ENCODE measurements at regions of chr16 and their contacts with region 1.

Region 1: DNA sequence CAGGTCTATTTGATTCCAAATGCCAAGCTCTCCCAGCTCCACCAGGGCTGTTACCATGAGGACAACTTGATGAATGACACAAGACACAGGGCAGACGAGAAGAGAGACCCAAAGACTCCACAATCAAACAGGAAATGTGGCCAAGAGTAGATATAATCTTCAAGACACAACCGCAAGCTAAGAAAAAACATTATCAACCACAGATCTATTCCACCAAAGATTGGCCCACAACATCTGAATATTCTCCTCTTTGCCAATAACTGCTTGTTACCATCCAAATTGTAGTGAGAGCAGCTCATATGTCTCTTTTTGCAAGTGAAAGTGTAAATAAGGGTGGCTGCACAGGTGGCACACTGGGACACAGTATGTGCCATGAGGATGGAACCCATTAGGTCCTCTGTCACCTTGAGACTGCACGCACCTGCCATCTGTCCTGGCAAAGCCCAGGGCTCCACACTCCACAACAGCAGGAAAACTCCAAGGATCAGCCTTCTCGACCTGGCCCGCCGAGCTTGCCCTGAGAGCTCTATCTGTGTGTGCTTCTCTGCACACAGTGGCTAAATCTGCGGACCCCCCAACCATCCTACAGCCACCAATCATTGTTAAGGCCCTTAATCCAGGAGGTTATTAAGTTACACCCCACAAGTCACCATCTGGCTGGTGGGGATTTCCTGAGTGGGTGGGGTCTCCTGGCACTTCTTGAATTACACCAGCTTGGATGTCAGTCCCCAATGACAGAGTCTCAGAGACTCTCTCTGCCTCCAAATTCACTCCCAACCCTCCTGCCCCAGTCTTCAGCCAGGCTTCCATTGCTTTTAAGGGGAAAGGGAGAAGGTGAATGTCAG is 50.5 kb downstream of the DYNLRB2 start:
- DNase-seq: peak; percentile 53
- H3K4me3 Mint-ChIP-seq: peak overlapping the region; percentile 17
- H3K27ac Mint-ChIP-seq: peak overlapping the region; percentile 76
- H3K4me1 Mint-ChIP-seq: peaks cover 66% of the 10 kb centered on the region
- H3K27me3 Mint-ChIP-seq: no peaks in the 10 kb centered on the region

Region 2: DNA sequence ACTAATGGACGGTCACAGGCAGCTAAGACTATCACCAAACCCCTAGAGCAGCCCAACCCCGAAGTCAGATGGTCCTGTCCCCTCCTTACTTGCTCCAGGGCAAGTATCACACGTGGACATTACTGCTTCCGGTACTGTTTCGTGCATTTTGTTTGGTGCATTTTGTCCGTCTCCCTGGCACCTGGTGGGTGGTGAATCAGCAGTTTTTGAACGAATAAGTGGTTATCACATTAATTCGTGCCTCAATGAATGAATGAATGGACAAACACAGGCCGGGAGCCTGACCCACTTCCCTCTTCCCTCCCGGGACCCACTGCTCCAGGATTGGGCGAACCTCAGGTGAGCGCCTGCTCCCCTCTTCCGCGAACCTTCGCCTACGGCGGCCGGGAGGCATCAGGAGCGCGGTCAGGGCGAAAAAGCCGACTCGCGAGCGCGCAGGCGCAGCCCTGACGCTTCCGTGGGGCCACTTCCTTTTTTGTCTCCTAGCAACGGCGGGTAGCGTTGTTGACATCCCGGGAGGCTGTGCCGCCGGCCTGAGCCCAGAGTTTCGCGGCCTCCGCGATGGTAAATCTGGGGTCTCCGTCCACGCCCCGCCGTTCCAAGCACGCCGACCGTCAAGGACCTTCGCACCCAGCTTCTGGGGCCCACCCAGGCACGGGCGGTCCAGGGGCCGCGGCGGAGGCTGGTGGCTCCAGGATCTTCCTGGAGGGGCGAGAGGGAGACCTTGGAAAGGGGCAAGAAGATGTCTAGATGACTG is 50.6 kb before region 1 on chr16 and contains the start of gene DYNLRB2:
- intact Hi-C with region 1: loop called (anchors 1 kb)
- DNase-seq: peak; percentile 92
- H3K4me3 Mint-ChIP-seq: peak within 1 kb of the TSS; percentile 87
- H3K27ac Mint-ChIP-seq: peak within 1 kb of the TSS; percentile 96
- H3K4me1 Mint-ChIP-seq: peaks cover 38% of the 10 kb centered on the region
- H3K27me3 Mint-ChIP-seq: peaks cover 2% of the 10 kb centered on the region
- total RNA-seq, gene DYNLRB2: not detected in 2 replicates

Region 3: DNA sequence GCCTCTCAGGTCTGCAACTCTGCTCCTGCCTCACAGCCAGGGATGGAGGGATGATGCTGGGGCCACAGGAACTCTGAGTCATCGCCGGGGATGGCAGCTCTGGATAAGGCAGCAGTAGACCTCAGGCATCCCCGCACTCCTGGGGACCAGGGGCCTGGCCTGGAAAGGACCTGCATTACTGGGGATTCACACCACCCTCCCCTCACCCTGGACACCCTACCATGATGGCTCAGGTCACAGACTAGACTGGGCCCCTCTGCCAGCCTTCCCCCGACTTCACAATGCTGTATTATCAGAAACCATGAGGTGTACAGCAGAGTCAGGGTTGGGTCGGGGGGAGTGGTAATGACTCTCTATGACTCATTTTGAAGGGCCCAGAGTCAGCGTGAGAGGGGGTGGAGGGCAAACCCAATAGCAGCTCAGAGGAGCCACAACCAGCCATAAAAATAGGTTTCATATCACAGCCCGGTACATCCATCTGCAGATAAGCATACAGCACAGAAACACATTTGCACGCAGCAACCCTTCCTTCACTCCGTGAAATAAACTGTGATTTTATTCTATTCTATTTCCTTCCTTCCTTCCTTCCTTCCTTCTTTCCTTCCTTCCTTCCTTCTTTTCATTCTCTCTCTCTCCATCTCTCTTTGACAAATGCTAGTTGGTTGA is 21.7 kb before region 1 on chr16:
- intact Hi-C with region 1: loop called (anchors 1 kb)
- DNase-seq: peak; percentile 74
- H3K4me3 Mint-ChIP-seq: peak overlapping the region; percentile 51
- H3K27ac Mint-ChIP-seq: peak overlapping the region; percentile 93
- H3K4me1 Mint-ChIP-seq: peaks cover 60% of the 10 kb centered on the region
- H3K27me3 Mint-ChIP-seq: no peaks in the 10 kb centered on the region

Region 4: GRCh38 chr16:80671281-80671849 is 80.1 kb after region 1 on chr16:
- intact Hi-C with region 1: no loop called
- DNase-seq: no peak
- H3K4me3 Mint-ChIP-seq: no peak overlapping the region
- H3K27ac Mint-ChIP-seq: no peak overlapping the region
- H3K4me1 Mint-ChIP-seq: peaks cover 34% of the 10 kb centered on the region
- H3K27me3 Mint-ChIP-seq: no peaks in the 10 kb centered on the region

Region 5: DNA sequence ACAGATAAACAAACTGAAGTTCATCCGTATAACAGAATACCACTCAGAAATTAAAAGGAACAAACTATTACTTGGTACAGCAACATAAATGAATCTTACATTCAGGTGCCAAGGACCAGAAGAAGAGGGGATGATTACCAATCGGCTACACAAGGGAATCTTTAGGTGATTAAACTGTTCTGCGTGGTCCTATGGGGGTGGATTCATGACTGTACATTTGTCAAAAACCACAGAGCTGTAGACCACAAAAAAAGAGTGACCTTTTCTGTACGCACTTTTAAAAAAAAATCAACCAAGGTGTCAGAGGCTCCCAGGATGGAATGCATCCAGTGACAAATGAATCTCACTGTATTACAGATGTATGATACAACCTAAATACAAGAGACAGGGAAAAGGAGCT is 102.3 kb after region 1 on chr16:
- intact Hi-C with region 1: loop called (anchors 1 kb)
- DNase-seq: no peak
- H3K4me3 Mint-ChIP-seq: no peak overlapping the region
- H3K27ac Mint-ChIP-seq: peak overlapping the region; percentile 71
- H3K4me1 Mint-ChIP-seq: peaks cover 83% of the 10 kb centered on the region
- H3K27me3 Mint-ChIP-seq: peaks cover 1% of the 10 kb centered on the region

Measured in activated T-helper 1 cell treated with anti-CD3 and anti-CD28 coated beads, Interleukin-12 subunit alpha, Interleukin-12 subunit beta, Interleukin-2, Interleukin-4 antibody, amounts not matched to agents 30 ng/mL and 10 ng/mL and 1 ng/mL, durations not matched to agents 14 hours and 24 hours and 36 hours (primary cell).